ENCODE measurements at regions of chrX and their contacts with region 1.

Region 1: GRCh38 chrX:10119399-10119990 is 37.3 kb upstream of the CLCN4 start:
- DNase-seq: peak; percentile 33
- ATAC-seq: peak; percentile 33
- H3K4me3 Mint-ChIP-seq: peak overlapping the region; percentile 42
- H3K27ac Mint-ChIP-seq: peak overlapping the region; percentile 89
- H3K4me1 Mint-ChIP-seq: peaks cover 74% of the 10 kb centered on the region
- H3K27me3 Mint-ChIP-seq: no peaks in the 10 kb centered on the region
- CTCF ChIP-seq: peak; percentile 89

Region 2: GRCh38 chrX:8815464-8816065 is 1303.9 kb before region 1 on chrX:
- CTCF ChIA-PET with region 1: no interaction called
- POLR2A ChIA-PET with region 1: no interaction called
- intact Hi-C with region 1: loop called (anchors 5 kb)
- DNase-seq: no peak
- ATAC-seq: no peak
- H3K4me3 Mint-ChIP-seq: no peak overlapping the region
- H3K27ac Mint-ChIP-seq: no peak overlapping the region
- H3K4me1 Mint-ChIP-seq: no peaks in the 10 kb centered on the region
- H3K27me3 Mint-ChIP-seq: peaks cover 3% of the 10 kb centered on the region
- CTCF ChIP-seq: no peak

Region 3: DNA sequence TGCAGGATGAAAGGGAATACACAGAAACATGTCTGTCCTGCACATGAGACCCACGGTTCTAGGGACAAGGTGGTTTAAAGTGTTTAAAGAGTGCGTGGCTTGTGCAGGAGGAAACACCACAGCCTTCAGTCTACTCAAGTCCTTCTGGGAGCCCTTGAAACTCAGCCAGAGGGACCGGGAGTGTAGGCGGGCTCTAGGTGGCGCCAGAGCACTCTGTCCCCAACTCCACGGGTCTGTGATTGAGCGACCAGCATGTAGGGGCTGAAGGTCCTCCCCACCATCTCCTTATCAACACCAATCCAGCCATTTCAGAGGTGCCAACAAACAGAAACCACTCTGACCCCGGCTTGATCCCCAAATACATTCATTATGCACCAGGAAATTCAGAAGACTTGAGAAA is 234.3 kb before region 1 on chrX:
- CTCF ChIA-PET with region 1: interaction called, 8 read pairs
- POLR2A ChIA-PET with region 1: interaction called, 8 read pairs
- intact Hi-C with region 1: loop called (anchors 1 kb)
- DNase-seq: peak; percentile 35
- ATAC-seq: peak; percentile 85
- H3K4me3 Mint-ChIP-seq: no peak overlapping the region
- H3K27ac Mint-ChIP-seq: no peak overlapping the region
- H3K4me1 Mint-ChIP-seq: peaks cover 2% of the 10 kb centered on the region
- H3K27me3 Mint-ChIP-seq: peaks cover 3% of the 10 kb centered on the region
- CTCF ChIP-seq: no peak

Region 4: DNA sequence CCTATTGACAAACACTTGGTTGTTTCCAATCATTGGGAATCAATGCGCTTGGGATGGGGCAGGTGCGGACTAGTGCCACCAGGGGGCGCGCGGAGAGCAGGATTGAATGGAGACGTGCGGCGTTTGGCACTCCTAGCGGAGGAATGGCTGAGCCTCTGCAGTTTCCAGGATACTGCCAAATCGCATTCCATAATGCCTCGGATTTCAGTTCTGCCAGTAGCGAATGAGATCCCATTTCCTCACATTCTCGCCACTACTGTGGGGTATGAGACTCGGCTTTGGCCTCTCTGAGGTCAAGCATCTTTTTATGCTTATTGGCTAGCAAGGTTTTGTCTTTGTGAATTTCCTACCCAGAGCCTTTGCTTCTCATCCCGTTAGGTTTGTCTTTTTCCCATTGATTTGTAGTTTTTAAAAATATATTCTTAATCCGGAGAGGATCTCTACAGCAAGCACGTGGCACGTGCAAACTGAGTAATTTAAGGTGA is 123.6 kb before region 1 on chrX:
- CTCF ChIA-PET with region 1: interaction called, 73 read pairs
- POLR2A ChIA-PET with region 1: interaction called, 38 read pairs
- intact Hi-C with region 1: loop called (anchors 1 kb)
- DNase-seq: peak; percentile 66
- ATAC-seq: peak; percentile 77
- H3K4me3 Mint-ChIP-seq: no peak overlapping the region
- H3K27ac Mint-ChIP-seq: no peak overlapping the region
- H3K4me1 Mint-ChIP-seq: peaks cover 12% of the 10 kb centered on the region
- H3K27me3 Mint-ChIP-seq: no peaks in the 10 kb centered on the region
- CTCF ChIP-seq: peak; percentile 76

Region 5: DNA sequence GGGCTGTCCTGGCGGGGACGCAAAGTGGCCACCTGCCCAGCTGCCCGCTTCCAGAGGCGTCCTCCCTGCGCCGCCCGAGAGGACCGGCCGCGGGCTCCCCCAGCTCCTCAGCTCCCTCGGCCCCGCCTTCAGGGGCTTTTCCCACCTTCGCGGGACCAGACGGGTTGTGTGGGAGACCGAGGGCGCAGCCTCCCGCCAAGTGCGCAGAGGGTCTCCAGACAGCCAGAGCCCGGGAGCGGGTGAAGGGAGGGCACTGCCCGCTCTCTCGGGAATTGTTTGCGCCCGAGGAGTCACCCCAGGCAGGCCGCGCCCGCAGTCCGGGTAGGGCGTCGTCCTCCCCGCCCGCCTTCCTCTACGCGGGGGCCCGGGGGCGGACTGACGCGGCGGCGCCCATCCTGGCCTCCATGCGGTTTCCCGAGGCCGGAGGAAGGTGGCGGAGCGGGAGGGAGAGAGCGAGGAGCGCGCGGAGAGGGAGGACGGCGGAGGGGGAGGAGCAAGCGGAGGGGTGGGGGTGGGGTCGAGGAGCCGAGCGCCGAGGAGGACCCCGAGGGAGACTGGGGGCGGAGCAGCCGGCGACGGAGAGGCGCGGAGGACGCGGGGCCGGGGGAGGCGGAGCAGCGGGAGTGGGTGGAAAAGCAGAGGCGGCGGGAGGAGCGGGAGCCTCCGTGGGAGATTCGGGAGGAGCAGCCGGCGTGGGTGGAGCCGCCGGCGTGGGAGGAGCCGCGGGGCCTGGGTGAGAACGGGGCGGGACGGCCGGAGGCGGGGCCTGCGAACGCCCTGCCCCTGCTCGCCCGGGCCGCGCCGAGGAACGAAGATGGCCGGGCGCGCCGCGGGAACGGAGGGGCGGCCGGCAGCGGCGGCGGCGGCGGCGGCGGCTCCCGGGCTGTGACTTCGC is 104.8 kb before region 1 on chrX:
- CTCF ChIA-PET with region 1: interaction called, 26 read pairs
- POLR2A ChIA-PET with region 1: interaction called, 21 read pairs
- intact Hi-C with region 1: loop called (anchors 1 kb)
- DNase-seq: peak; percentile 81
- ATAC-seq: peak; percentile 83
- H3K4me3 Mint-ChIP-seq: peak overlapping the region; percentile 83
- H3K27ac Mint-ChIP-seq: peak overlapping the region; percentile 69
- H3K4me1 Mint-ChIP-seq: peaks cover 63% of the 10 kb centered on the region
- H3K27me3 Mint-ChIP-seq: no peaks in the 10 kb centered on the region
- CTCF ChIP-seq: no peak

Region 6: GRCh38 chrX:10086676-10087075 is 32.8 kb before region 1 on chrX:
- CTCF ChIA-PET with region 1: interaction called, 18 read pairs
- POLR2A ChIA-PET with region 1: interaction called, 229 read pairs
- intact Hi-C with region 1: loop called (anchors 1 kb)
- DNase-seq: no peak
- ATAC-seq: no peak
- H3K4me3 Mint-ChIP-seq: no peak overlapping the region
- H3K27ac Mint-ChIP-seq: no peak overlapping the region
- H3K4me1 Mint-ChIP-seq: peaks cover 69% of the 10 kb centered on the region
- H3K27me3 Mint-ChIP-seq: no peaks in the 10 kb centered on the region
- CTCF ChIP-seq: no peak